ENCODE measurements at regions of chr20 and their contacts with region 1.

Region 1: DNA sequence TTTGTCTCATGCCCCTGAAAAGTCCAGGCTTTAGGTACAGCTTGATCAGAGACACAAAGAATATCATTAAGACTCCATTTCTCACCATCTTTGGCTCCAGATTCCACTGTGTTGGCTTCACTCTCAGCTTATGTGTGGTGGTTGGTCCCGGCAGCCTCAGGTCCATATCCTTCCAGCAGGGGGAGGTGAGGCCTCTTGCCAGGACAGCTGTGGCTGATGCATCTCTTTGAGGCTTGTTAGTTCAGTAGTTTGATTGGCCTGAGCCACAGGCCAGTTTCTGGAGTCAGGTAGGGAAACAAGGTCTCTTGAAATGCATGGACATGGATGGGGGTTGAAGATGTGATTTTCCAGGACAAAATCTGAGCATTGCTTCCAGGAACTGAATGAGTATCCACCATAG is 62.4 kb downstream of the JAG1 start:
- DNase-seq: peak; percentile 41
- H3K4me3 ChIP-seq: no peak overlapping the region
- H3K27ac ChIP-seq: no peak overlapping the region
- H3K4me1 ChIP-seq: no peaks in the 10 kb centered on the region
- H3K27me3 ChIP-seq: no peaks in the 10 kb centered on the region
- CTCF ChIP-seq: peak; percentile 50 to 56
- POLR2A ChIP-seq: no peak

Region 2: GRCh38 chr20:10622657-10623418 is 11.5 kb after region 1 on chr20:
- CTCF ChIA-PET with region 1: interaction called, 13 read pairs
- POLR2A ChIA-PET with region 1: no interaction called
- dilution Hi-C with region 1: no loop called
- intact Hi-C with region 1: no loop called
- DNase-seq: peak; percentile 78
- H3K4me3 ChIP-seq: peak overlapping the region in 2 of 3 experiments; percentile 2 to 20
- H3K27ac ChIP-seq: peak overlapping the region; percentile 40
- H3K4me1 ChIP-seq: peaks cover 30% of the 10 kb centered on the region
- H3K27me3 ChIP-seq: no peaks in the 10 kb centered on the region
- CTCF ChIP-seq: no peak
- POLR2A ChIP-seq: no peak

Region 3: DNA sequence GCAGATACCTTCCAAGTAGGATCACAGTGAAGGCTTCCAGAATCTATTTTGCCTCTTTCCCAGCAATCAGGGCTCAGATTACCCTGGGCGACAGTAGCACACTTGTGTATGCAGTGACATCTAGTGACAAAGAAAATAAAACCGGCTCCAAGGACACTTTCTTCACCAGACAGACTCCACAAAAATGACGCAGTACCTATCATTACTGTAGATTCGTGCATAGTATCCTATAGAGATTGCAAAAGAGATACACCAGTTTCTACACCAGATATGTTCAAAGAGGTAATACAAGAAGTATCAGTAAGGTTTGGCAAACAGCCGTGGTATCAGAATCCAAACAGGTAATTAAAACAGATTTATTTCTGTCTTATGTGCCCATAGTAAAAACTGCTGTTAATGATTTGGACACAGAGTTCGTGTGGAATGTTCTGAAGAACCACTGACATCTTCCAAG is 662.8 kb after region 1 on chr20:
- CTCF ChIA-PET with region 1: no interaction called
- POLR2A ChIA-PET with region 1: no interaction called
- dilution Hi-C with region 1: no loop called
- intact Hi-C with region 1: loop called (anchors 1 kb)
- DNase-seq: peak; percentile 74
- H3K4me3 ChIP-seq: no peak overlapping the region
- H3K27ac ChIP-seq: no peak overlapping the region
- H3K4me1 ChIP-seq: no peaks in the 10 kb centered on the region
- H3K27me3 ChIP-seq: no peaks in the 10 kb centered on the region
- CTCF ChIP-seq: peak; percentile 42 to 46
- POLR2A ChIP-seq: no peak

Measured in endothelial cell of umbilical vein (primary cell).